Ovary (tissue), 10 donors: ENCODE measurements at regions of chr15 and their contacts with region 1.

Region 1: DNA sequence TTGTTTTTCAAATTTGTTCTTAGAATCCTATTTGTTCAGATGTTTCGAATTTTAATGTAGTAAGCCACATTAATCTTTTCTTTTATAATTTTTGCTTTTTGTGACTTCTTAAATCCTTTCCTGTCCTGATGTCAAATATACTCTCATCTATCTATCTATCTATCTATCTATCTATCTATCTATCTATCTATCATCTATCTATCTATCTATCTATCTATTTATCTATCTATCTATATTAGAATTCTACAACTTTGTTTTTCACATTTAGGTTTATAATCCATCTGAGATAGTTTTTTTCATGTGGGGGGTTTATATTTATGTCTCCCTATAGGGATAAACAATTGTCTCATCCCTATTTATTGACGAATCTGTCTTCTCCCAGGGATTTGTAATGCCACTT is 32.1 kb downstream of the CTXND1 start:
- DNase-seq: no peak
- H3K4me3 ChIP-seq: no peak overlapping the region
- H3K27ac ChIP-seq: no peak overlapping the region
- H3K4me1 ChIP-seq: no peaks in the 10 kb centered on the region
- H3K27me3 ChIP-seq: no peaks in the 10 kb centered on the region
- CTCF ChIP-seq: no peak
- EP300 ChIP-seq: no peak
- POLR2A ChIP-seq: no peak

Region 2: GRCh38 chr15:80121546-80121945 is 98.4 kb before region 1 on chr15:
- intact Hi-C with region 1: no loop called
- DNase-seq: no peak
- H3K4me3 ChIP-seq: no peak overlapping the region
- H3K27ac ChIP-seq: no peak overlapping the region
- H3K4me1 ChIP-seq: no peaks in the 10 kb centered on the region
- H3K27me3 ChIP-seq: no peaks in the 10 kb centered on the region
- CTCF ChIP-seq: no peak
- EP300 ChIP-seq: no peak
- POLR2A ChIP-seq: no peak

Region 3: DNA sequence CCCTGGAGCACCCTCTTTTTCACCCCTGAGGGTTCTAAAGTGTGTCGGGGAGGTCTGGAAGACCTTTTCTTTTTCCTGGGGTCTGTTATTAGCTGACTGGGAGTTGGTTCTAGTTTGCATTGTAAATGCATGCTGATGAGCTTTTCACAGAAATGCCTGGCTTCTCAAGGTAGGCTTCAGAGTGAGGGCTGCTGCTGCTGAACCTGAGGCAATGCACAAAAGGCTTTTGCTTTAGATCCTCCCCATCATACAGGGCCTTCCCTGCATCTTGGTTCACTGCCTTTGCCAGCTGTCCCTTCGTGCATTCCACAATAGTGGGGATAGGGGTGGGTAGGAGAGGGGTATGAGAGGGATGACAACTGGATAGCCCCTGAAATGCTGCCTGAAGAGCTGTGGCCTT is 20.6 kb before region 1 on chr15:
- intact Hi-C with region 1: loop called in 1 of 4 experiments (anchors 2 kb)
- DNase-seq: no peak
- H3K4me3 ChIP-seq: no peak overlapping the region
- H3K27ac ChIP-seq: no peak overlapping the region
- H3K4me1 ChIP-seq: no peaks in the 10 kb centered on the region
- H3K27me3 ChIP-seq: no peaks in the 10 kb centered on the region
- CTCF ChIP-seq: no peak
- EP300 ChIP-seq: no peak
- POLR2A ChIP-seq: no peak